Right lobe of liver (tissue), 6 donors: ENCODE measurements at regions of chr12 and their contacts with region 1.

Region 1: GRCh38 chr12:110449799-110450497 is at the start of gene ARPC3:
- DNase-seq: peak; percentile 96 to 97 (median 97)
- ATAC-seq: peak; percentile 94 to 98 (median 96)
- H3K4me3 ChIP-seq: peak within 1 kb of the TSS; percentile 69 to 92 (median 85)
- H3K27ac ChIP-seq: peak within 1 kb of the TSS; percentile 81 to 89 (median 86)
- H3K4me1 ChIP-seq: peaks cover 0 to 30% (median 4%) of the 10 kb centered on the region in 4 donors
- H3K27me3 ChIP-seq: no peaks in the 10 kb centered on the region
- CTCF ChIP-seq: peak; percentile 87 to 95 (median 90)
- POLR2A ChIP-seq: peak; percentile 64
- total RNA-seq, gene ARPC3: 65.4 to 291 (median 101) TPM

Region 2: GRCh38 chr12:110513842-110514241 is 63.9 kb after region 1 on chr12:
- intact Hi-C with region 1: loop called in 1 of 2 experiments (anchors 10 kb)
- DNase-seq: no peak
- ATAC-seq: no peak
- H3K4me3 ChIP-seq: no peak overlapping the region
- H3K27ac ChIP-seq: no peak overlapping the region
- H3K4me1 ChIP-seq: no peaks in the 10 kb centered on the region
- H3K27me3 ChIP-seq: no peaks in the 10 kb centered on the region
- CTCF ChIP-seq: no peak
- POLR2A ChIP-seq: no peak

Region 3: GRCh38 chr12:110590806-110591326 is 140.9 kb after region 1 on chr12:
- intact Hi-C with region 1: loop called in 1 of 2 experiments (anchors 10 kb)
- DNase-seq: no peak
- ATAC-seq: peak; percentile 57 to 73 (median 62)
- H3K4me3 ChIP-seq: peak overlapping the region in 1 of 3 donors; percentile 7
- H3K27ac ChIP-seq: peak overlapping the region; percentile 39 to 91 (median 72)
- H3K4me1 ChIP-seq: peaks cover 0 to 33% (median 13%) of the 10 kb centered on the region in 4 donors
- H3K27me3 ChIP-seq: no peaks in the 10 kb centered on the region
- CTCF ChIP-seq: no peak
- POLR2A ChIP-seq: no peak